ENCODE measurements at regions of chr9 and their contacts with region 1.

Region 1: DNA sequence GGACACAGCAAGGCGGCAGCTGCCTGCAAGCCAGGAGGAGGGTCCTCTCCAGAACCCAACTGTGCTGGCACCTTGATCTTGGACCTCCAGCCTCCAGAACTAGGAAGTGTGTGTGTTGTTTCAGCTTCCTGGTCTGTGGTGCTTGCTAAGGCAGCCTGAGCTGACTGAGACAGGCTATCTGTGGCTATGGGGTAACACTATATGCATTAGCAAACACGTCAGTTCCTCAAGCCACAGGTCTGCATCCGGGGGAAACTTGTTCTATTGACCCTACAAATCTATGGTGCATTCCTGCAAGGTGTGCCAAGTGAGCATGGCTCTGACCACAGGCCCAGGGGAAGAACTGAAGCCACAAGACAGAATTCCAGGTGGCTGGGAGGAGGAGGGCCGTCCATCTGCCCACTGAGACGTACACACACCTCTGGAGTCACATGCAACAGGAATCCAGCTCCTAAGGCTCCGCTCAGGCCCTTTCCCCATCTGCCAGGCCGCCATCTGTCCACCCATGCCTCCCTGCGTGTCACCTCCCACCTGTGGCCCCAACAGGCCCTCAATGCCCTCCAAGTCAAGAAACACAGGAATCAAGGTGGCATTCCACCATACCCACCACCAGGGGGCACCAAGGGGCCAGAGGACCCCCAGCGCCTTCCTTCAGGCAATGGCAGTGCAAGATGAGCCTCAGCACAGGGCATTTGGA is 174.9 kb downstream of the ROR2 start:
- DNase-seq: peak; percentile 36
- H3K4me3 ChIP-seq: no peak overlapping the region
- H3K27ac ChIP-seq: no peak overlapping the region
- H3K4me1 ChIP-seq: no peaks in the 10 kb centered on the region
- H3K27me3 ChIP-seq: no peaks in the 10 kb centered on the region
- CTCF ChIP-seq: peak; percentile 68 to 92
- POLR2A ChIP-seq: no peak

Region 2: GRCh38 chr9:91758491-91758981 is 16.6 kb before region 1 on chr9:
- CTCF ChIA-PET with region 1: interaction called, 10 read pairs
- POLR2A ChIA-PET with region 1: no interaction called
- dilution Hi-C with region 1: no loop called
- intact Hi-C with region 1: no loop called
- DNase-seq: peak; percentile 10
- H3K4me3 ChIP-seq: no peak overlapping the region
- H3K27ac ChIP-seq: no peak overlapping the region
- H3K4me1 ChIP-seq: no peaks in the 10 kb centered on the region
- H3K27me3 ChIP-seq: no peaks in the 10 kb centered on the region
- CTCF ChIP-seq: peak; percentile 61
- POLR2A ChIP-seq: no peak

Region 3: GRCh38 chr9:91949946-91950664 is 174.9 kb after region 1 on chr9 and contains the start of gene ROR2:
- CTCF ChIA-PET with region 1: interaction called, 8 read pairs
- POLR2A ChIA-PET with region 1: no interaction called
- dilution Hi-C with region 1: no loop called
- intact Hi-C with region 1: loop called (anchors 1 kb)
- DNase-seq: peak; percentile 7
- H3K4me3 ChIP-seq: peak within 1 kb of the TSS in 2 of 3 experiments; percentile 4 to 9
- H3K27ac ChIP-seq: no peak within 1 kb of the TSS
- H3K4me1 ChIP-seq: no peaks in the 10 kb centered on the region
- H3K27me3 ChIP-seq: peaks cover 35 to 67% of the 10 kb centered on the region in 2 experiments
- CTCF ChIP-seq: peak; percentile 52 to 57
- POLR2A ChIP-seq: no peak
- total RNA-seq, gene ROR2: not detected in 2 replicates

Measured in endothelial cell of umbilical vein (primary cell).